Breast epithelium (tissue), 4 donors: ENCODE measurements at regions of chr1 and their contacts with region 1.

Region 1: DNA sequence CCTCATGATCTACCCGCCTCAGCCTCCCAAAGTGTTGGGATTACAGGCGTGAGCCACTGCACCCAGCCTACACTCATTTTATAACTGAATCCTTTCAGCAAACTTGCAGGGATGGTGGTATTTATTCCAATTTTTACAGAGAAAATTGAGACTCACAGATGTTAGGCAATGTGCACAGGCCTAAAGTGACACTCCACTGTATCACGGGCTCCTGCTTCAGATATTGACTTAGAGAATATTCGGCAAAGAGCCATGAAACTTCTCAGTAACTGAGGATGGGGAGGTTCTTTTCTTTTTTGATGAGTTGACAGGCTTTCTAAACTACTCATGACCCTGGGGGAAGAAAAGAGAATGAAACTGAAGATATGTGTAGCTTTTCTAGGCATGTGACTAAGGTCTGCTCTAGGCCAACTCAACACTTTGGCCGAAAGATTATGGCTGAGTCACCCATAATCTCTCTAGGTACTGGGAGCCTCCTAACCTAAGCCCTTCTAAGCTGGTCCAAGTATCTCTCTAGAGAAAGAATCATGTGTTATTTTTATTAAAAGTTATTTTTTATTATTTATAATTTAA is 19.9 kb upstream of the PTCH2 start:
- DNase-seq: no peak
- H3K4me3 ChIP-seq: no peak overlapping the region
- H3K27ac ChIP-seq: peak overlapping the region in 1 of 2 donors; percentile 11
- H3K4me1 ChIP-seq: no peaks in the 10 kb centered on the region
- H3K27me3 ChIP-seq: no peaks in the 10 kb centered on the region
- CTCF ChIP-seq: no peak
- POLR2A ChIP-seq: no peak

Region 2: DNA sequence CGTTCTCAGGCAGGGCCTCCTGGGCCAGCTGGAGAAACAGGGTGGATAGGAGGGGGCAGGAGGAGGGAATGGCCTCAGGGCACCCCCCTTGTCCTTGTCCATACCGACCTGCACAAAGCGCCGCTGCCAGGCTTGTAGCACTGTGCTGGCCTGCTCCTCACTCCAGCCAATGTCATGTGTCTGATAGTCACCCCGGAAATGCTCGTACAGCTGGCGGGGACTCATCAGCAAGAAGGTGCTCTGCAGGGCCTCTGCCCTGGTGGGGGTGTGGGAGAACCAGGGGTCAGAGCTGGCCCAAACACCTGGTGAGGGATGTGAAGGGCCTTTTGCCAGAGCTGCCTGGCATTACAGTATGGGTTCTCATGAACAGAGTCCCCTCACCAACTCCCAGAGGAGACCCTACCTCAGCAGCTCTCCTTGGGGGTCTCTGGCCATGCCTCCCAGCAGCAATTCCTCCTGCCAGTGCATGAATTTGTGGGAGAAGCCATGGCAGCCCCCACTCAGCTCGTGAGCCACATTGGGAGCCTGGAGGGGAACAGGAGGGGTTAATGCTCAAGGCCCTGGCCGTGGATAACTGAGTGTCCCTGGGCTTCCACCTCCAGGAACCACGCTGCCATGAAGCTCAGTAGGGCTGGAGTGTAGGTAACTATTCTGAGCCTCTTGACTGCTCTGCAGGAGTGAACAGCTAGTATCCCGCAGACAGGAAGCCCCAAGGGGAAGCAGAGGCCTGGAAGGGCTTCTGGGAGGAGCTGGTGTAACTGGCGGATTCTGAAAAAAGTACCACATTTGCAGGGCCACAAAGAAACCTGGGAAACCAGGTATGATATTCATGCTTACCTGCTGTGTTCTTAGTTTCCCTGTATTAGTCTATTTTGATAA is 33.2 kb before region 1 on chr1:
- intact Hi-C with region 1: loop called (anchors 1 kb)
- DNase-seq: no peak
- H3K4me3 ChIP-seq: no peak overlapping the region
- H3K27ac ChIP-seq: no peak overlapping the region
- H3K4me1 ChIP-seq: no peaks in the 10 kb centered on the region
- H3K27me3 ChIP-seq: no peaks in the 10 kb centered on the region
- CTCF ChIP-seq: no peak
- POLR2A ChIP-seq: no peak

Region 3: GRCh38 chr1:45238846-45239245 is 375.9 kb after region 1 on chr1:
- intact Hi-C with region 1: loop called (anchors 5 kb)
- DNase-seq: no peak
- H3K4me3 ChIP-seq: no peak overlapping the region
- H3K27ac ChIP-seq: no peak overlapping the region
- H3K4me1 ChIP-seq: no peaks in the 10 kb centered on the region
- H3K27me3 ChIP-seq: no peaks in the 10 kb centered on the region
- CTCF ChIP-seq: no peak
- POLR2A ChIP-seq: no peak